Colonic mucosa (tissue), 4 donors: ENCODE measurements at regions of chr1 and their contacts with region 1.

Region 1: GRCh38 chr1:23772049-23772853 is 6.0 kb upstream of the PITHD1 start:
- DNase-seq: peak; percentile 92
- H3K4me3 ChIP-seq: no peak overlapping the region
- H3K27ac ChIP-seq: no peak overlapping the region
- H3K4me1 ChIP-seq: no peaks in the 10 kb centered on the region
- H3K27me3 ChIP-seq: no peaks in the 10 kb centered on the region
- CTCF ChIP-seq: peak; percentile 89

Region 2: DNA sequence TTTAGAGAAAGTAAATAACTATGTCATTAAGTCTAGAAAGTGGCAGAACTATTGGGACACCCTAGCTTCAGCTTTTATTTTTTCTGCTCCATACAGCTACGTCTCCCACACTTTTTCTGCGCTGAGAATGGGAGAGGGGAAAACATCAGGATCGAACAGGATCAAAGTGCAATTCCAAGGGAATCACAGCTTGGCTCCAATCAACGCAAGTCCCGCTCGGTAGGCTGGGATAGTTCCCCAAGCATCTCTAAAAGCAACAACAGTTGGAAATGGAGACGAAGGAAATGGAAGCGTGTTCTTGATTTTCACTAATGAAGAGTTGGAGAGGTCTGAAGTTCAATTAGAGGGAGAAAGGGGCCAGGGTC is 52.4 kb after region 1 on chr1:
- intact Hi-C with region 1: no loop called
- DNase-seq: no peak
- H3K4me3 ChIP-seq: peak overlapping the region; percentile 95
- H3K27ac ChIP-seq: peak overlapping the region; percentile 91
- H3K4me1 ChIP-seq: no peaks in the 10 kb centered on the region
- H3K27me3 ChIP-seq: no peaks in the 10 kb centered on the region
- CTCF ChIP-seq: no peak

Region 3: DNA sequence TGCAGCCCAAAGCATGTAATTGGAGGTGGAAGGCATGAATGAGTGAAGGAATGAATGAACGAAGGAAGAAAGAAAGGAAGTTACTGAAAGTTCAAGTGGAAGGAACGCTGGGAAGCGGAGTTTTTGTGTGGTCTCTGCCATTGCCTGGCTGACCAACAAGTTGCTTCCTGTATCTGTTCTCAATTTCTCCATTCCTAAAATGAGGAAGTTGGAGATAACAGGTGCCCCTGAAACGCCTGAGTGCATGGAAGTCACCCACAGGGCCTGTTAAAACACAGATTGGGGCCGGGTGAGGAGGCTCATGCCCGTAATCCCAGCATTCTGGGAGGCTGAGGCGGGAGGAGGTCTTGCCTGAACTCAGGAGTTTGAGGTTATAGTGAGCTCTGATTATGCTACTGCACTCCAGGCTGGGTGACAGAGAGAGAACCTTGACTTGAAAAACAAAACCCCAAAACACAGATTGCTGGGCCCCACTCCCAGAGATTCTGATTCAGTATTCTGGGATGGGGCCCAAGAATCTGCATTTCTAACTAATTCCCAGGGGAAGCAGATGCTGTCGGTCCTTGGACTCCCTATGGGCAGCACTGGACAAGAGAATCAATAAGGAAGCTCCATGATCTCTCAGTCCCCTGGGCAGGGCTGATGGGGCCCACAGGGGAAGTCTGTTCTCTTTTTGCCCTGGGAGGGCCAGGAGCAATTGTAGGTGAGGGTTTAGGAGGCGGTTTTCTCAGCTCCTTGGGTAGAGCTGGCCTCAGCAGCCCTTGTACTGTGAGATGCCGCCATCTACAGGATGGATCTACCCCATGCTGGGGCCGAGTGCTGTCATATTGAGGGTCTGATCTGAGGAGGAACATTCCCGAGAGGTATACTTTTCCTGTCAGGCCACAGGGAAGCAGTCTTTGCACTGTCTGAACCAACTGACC is 144.2 kb after region 1 on chr1:
- intact Hi-C with region 1: loop called (anchors 5 kb)
- DNase-seq: peak; percentile 81
- H3K4me3 ChIP-seq: no peak overlapping the region
- H3K27ac ChIP-seq: no peak overlapping the region
- H3K4me1 ChIP-seq: peaks cover 5% of the 10 kb centered on the region
- H3K27me3 ChIP-seq: no peaks in the 10 kb centered on the region
- CTCF ChIP-seq: peak; percentile 58